K562 (cell line): ENCODE measurements at regions of chr7 and their contacts with region 1.

Region 1: DNA sequence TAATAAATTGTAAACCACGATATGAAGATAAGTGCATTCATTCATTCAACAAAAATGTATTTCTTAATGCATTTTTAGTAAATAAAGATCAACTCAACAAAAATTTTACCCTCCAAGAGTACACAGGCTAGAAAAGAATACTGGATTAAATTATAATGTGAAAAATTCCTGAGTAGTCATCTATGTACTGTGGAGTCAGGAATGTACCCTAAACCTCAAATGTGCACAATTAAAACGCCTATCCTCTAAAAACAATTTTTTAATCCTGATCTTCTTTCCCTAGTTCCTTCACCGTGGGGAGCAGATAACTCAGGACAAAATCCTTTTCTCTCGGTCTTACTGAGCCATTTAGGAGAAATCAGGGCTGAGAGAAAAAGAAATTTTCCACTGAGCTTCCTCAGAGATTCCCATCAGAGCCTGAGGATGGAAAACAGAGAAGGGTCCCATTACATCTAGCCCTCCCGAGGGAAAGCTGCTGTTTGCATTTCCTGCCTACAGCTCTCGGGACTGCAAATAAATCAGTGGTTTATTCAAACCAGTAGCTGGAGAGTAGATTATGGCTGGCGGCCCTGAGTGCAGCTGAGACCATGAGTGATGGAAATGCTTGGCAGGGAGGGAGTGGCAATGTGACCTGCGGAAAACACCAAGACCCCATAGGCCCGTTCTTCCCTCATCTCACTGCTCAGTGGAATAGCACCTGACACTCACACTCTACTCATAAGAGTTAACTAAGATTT is 7.4 kb downstream of the TAS2R40 start:
- DNase-seq: no peak
- ATAC-seq: no peak; the same call in 2 of the 3 replicates
- H3K4me3 ChIP-seq: no peak overlapping the region
- H3K27ac ChIP-seq: no peak overlapping the region
- H3K4me1 ChIP-seq: no peaks in the 10 kb centered on the region
- H3K27me3 ChIP-seq: peaks cover 15 to 23% of the 10 kb centered on the region in 2 experiments; a peak in 4 of 5 replicates
- CTCF ChIP-seq: no peak
- EP300 ChIP-seq: no peak
- POLR2A ChIP-seq: no peak
- RAD21 ChIP-seq: no peak

Region 2: DNA sequence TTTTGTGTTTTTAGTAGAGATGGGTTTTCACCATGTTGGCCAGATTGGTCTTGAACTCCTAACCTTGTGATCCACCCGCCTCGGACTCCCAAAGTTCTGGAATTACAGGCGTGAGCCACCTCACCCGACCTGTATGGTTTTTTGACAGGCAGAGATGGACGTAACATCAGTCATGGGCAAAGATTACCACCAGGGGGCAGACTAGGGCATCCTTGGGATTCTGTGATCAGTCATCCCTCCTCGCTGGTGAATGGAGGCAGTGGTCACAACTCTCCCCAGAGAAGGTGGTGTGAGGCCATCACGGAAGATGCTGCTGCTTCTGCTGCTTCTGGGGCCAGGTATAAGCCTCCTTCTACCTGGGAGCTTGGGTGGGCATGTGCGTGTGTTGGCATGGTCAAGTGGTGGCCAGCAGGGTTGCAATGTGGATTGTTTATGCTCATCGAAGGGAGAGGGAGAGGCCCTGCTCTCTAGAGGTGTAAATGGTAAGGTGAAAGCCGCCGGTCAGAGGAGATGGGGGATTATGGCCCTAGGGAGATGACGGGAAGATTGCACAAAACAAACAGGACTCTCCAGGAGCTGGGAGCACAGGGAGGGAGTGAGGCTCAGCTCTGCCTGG is 602.7 kb before region 1 on chr7:
- CTCF ChIA-PET with region 1: no interaction called
- POLR2A ChIA-PET with region 1: no interaction called
- in situ Hi-C with region 1: loop called (anchors 10 kb)
- intact Hi-C with region 1: no loop called
- DNase-seq: peak; percentile 60 to 80 (median 66)
- ATAC-seq: peak; percentile 99
- H3K4me3 ChIP-seq: no peak overlapping the region
- H3K27ac ChIP-seq: no peak overlapping the region
- H3K4me1 ChIP-seq: no peaks in the 10 kb centered on the region
- H3K27me3 ChIP-seq: peaks cover 0 to 8% of the 10 kb centered on the region in 2 experiments; a peak in 3 of 5 replicates
- CTCF ChIP-seq: peak; percentile 78 to 82 (median 81)
- EP300 ChIP-seq: no peak
- POLR2A ChIP-seq: no peak
- RAD21 ChIP-seq: peak; percentile 43 to 55

Region 3: GRCh38 chr7:143269251-143269650 is 40.0 kb after region 1 on chr7:
- CTCF ChIA-PET with region 1: no interaction called
- POLR2A ChIA-PET with region 1: no interaction called
- in situ Hi-C with region 1: no loop called
- intact Hi-C with region 1: no loop called
- DNase-seq: peak in 2 of 4 experiments; percentile 6 to 30
- ATAC-seq: peak; percentile 43
- H3K4me3 ChIP-seq: no peak overlapping the region
- H3K27ac ChIP-seq: no peak overlapping the region
- H3K4me1 ChIP-seq: peaks cover 15 to 18% of the 10 kb centered on the region in 2 experiments
- H3K27me3 ChIP-seq: no peaks in the 10 kb centered on the region
- CTCF ChIP-seq: no peak
- EP300 ChIP-seq: no peak
- POLR2A ChIP-seq: no peak
- RAD21 ChIP-seq: no peak